Activated T-helper 1 cell treated with anti-CD3 and anti-CD28 coated beads, Interleukin-12 subunit alpha, Interleukin-12 subunit beta, Interleukin-2, Interleukin-4 antibody, amounts not matched to agents 30 ng/mL and 10 ng/mL and 1 ng/mL, durations not matched to agents 14 hours and 24 hours and 36 hours (primary cell): ENCODE measurements at regions of chr12 and their contacts with region 1.

Region 1: GRCh38 chr12:132687208-132688164 is at the starts of genes POLE and PXMP2:
- DNase-seq: peak; percentile 91
- H3K4me3 Mint-ChIP-seq: peak within 1 kb of the TSS; percentile 84
- H3K27ac Mint-ChIP-seq: peak within 1 kb of the TSS; percentile 80
- H3K4me1 Mint-ChIP-seq: peaks cover 26% of the 10 kb centered on the region
- H3K27me3 Mint-ChIP-seq: no peaks in the 10 kb centered on the region
- total RNA-seq, gene POLE: 168 and 170 TPM in 2 replicates
- total RNA-seq, gene PXMP2: 21.5 and 23.3 TPM in 2 replicates

Region 2: DNA sequence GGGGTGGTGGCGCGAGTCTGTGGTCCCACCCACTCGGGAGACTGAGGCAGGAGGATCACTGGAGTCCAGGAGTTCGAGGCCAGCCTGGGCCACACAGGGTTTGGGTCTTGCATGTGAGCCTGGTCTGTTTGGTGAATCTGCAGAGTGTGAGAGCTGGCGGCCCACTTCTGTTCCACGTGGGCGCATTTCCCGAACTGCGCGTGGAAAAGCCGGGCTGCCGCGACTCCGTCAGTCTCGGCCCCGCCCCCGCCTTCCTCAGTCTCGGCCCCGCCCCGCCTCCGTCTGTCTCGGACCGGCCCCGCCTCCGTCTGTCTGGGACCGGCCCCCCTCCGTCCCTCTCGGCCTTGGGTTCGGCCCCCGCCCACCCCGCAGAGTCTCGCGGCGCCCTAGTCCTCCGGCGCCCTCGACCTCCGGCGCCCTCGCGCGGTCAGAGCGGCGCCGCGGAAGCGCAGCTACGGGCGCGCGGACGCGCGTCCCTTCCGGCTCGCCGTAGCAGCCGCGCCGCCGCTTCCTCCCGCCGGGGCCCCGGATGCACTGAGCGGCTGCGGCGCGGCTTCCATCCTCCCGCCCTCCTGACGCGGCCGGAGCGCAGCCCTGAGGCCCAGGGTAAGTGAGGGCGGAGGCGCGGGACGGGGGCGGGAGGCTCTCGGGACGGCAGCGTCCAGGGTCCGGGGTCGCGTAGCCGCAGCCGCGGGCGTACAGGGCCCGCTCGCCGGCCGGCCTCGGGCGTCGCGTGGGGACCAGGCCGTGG is 737.9 kb before region 1 on chr12 and contains the start of gene EP400:
- intact Hi-C with region 1: loop called (anchors 5 kb)
- DNase-seq: peak; percentile 89
- H3K4me3 Mint-ChIP-seq: peak within 1 kb of the TSS; percentile 92
- H3K27ac Mint-ChIP-seq: peak within 1 kb of the TSS; percentile 90
- H3K4me1 Mint-ChIP-seq: peaks cover 30% of the 10 kb centered on the region
- H3K27me3 Mint-ChIP-seq: no peaks in the 10 kb centered on the region
- total RNA-seq, gene EP400: 66.6 TPM in 2 replicates

Region 3: GRCh38 chr12:132144115-132144812 is 543.2 kb before region 1 on chr12 and contains the starts of genes DDX51 and NOC4L:
- intact Hi-C with region 1: loop called (anchors 10 kb)
- DNase-seq: peak; percentile 96
- H3K4me3 Mint-ChIP-seq: peak within 1 kb of the TSS; percentile 90
- H3K27ac Mint-ChIP-seq: peak within 1 kb of the TSS; percentile 95
- H3K4me1 Mint-ChIP-seq: peaks cover 12% of the 10 kb centered on the region
- H3K27me3 Mint-ChIP-seq: peaks cover 2% of the 10 kb centered on the region
- total RNA-seq, gene DDX51: 48.8 and 55.0 TPM in 2 replicates
- total RNA-seq, gene NOC4L: 49.5 and 51.3 TPM in 2 replicates

Region 4: DNA sequence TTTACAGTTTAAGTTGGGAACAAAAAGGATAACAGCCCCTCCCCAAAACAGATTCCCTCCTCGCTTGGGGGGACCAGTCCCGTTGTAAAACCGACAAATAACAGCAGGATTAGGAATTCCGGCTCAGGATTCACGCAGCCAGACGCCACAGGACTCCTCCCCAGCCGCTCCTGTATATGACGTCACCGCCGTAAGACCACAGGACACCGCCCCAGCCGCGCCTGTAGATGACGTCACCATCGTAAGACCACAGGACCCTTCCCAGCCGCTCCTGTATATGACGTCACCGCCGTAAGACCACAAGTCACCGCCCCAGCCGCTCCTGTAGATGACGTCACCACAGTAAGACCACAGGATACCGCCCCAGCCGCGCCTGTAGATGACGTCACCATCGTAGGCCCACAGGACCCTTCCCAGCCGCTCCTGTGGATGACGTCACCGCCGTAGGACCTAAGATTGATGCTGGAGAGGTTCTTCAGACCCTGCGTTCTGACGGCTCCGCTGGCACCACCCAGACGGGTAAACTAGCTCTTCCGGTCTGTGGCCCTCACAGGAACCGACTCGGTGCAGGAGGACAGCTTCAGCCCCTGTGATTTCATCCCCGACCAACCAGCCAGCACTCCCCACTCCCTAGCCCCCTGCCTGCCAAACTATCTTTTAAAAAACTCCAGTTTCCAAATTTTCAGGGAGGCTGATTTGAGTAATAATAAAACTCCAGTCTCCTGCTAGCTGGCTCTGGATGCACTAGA is 241.4 kb before region 1 on chr12:
- intact Hi-C with region 1: loop called (anchors 1 kb)
- DNase-seq: peak; percentile 62
- H3K4me3 Mint-ChIP-seq: peak overlapping the region; percentile 93
- H3K27ac Mint-ChIP-seq: peak overlapping the region; percentile 97
- H3K4me1 Mint-ChIP-seq: peaks cover 37% of the 10 kb centered on the region
- H3K27me3 Mint-ChIP-seq: peaks cover 3% of the 10 kb centered on the region

Region 5: DNA sequence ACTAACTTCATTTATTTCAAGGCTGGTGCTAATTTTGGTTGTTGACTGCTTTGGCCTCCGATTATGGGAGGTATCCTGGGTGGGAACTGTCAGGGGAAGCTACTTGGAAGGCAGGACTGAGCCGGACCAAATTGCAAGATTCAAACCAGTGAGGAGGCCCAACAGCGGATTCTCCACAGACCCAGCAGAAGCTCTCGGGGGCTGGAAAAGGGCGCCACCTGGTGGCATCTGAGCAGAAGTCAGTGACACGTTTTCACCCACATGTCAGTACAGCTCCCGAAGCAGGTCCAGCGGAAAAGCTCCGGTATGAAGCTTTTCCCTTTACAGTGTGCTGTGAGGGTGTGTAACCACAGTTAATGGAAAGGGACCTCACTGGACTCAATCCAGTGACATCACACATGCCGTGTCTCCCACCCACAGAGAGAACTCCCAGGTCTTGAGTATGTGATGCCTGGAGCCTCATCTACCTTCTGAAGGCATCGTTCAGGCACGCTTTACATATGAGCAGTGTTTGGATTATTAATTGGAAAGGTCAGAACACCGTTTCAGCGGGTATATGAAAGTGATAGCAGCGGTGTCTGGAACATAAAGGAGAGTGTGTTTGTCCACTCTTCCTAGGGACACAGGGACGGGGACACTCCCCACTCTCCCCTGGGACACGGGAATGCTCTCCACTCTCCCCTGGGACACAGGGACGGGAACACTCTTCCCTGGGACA is 72.5 kb before region 1 on chr12:
- intact Hi-C with region 1: no loop called
- DNase-seq: peak; percentile 66
- H3K4me3 Mint-ChIP-seq: no peak overlapping the region
- H3K27ac Mint-ChIP-seq: no peak overlapping the region
- H3K4me1 Mint-ChIP-seq: peaks cover 8% of the 10 kb centered on the region
- H3K27me3 Mint-ChIP-seq: peaks cover 34% of the 10 kb centered on the region

Region 6: GRCh38 chr12:132672017-132672515 is 15.4 kb before region 1 on chr12:
- intact Hi-C with region 1: no loop called
- DNase-seq: no peak
- H3K4me3 Mint-ChIP-seq: no peak overlapping the region
- H3K27ac Mint-ChIP-seq: no peak overlapping the region
- H3K4me1 Mint-ChIP-seq: peaks cover 5% of the 10 kb centered on the region
- H3K27me3 Mint-ChIP-seq: no peaks in the 10 kb centered on the region

Region 7: GRCh38 chr12:132710422-132711168 is 23.1 kb after region 1 on chr12 and contains the start of gene PGAM5:
- intact Hi-C with region 1: loop called (anchors 1 kb)
- DNase-seq: peak; percentile 94
- H3K4me3 Mint-ChIP-seq: peak within 1 kb of the TSS; percentile 92
- H3K27ac Mint-ChIP-seq: peak within 1 kb of the TSS; percentile 96
- H3K4me1 Mint-ChIP-seq: peaks cover 15% of the 10 kb centered on the region
- H3K27me3 Mint-ChIP-seq: no peaks in the 10 kb centered on the region
- total RNA-seq, gene PGAM5: 107 and 111 TPM in 2 replicates

Region 8: DNA sequence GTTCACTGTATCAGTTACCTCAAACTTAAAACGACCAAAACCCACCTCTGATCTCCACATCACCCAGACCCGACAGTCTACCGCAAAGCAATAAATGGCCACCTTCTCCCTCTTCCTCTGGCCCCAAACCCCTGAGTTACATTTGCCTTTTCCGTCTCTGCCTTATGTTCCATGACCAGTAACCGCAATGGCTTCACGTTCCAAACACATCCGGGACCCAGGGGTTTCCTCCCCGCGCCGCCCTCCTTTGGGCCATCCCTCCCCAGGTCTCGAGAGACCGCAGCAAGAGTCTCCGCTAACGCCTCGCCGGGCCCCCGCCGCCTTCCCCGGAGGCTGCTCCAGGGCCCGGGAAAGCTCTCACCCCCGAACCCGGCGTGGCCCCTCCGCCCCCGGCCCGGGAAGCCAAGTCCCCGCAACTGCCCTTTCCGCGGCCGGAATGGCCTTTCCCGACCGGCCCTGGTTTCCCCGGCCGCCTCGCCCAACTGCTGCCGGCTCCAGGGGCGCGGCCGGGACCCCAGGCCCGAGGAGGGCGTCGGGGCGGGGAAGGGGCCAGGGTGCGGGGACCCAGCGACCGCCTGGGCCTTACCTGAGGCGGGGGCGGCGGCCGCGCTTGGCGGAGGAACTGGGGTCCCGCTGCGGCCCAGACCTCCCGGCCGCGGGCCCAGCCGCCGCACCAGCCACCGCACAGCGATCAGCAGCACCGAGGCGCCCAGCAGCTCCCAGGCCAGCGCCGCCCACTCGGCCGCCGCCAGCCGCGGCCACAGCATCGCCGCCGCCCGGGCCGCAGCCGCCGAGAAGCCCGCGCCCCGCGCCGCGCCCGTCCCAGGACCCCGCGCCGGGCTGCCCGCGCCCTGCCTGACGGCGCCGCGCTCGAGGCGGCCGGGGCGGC is 73.8 kb after region 1 on chr12 and contains the start of gene ANKLE2:
- intact Hi-C with region 1: loop called (anchors 1 kb)
- DNase-seq: peak; percentile 74
- H3K4me3 Mint-ChIP-seq: peak within 1 kb of the TSS; percentile 93
- H3K27ac Mint-ChIP-seq: peak within 1 kb of the TSS; percentile 96
- H3K4me1 Mint-ChIP-seq: peaks cover 24% of the 10 kb centered on the region
- H3K27me3 Mint-ChIP-seq: no peaks in the 10 kb centered on the region
- total RNA-seq, gene ANKLE2: 151 and 156 TPM in 2 replicates